ENCODE measurements at regions of chr17 and their contacts with region 1.

Region 1: GRCh38 chr17:43393944-43394482 is 4.8 kb upstream of the ARL4D start:
- DNase-seq: no peak
- H3K4me3 ChIP-seq: no peak overlapping the region
- CTCF ChIP-seq: peak; percentile 70

Region 2: DNA sequence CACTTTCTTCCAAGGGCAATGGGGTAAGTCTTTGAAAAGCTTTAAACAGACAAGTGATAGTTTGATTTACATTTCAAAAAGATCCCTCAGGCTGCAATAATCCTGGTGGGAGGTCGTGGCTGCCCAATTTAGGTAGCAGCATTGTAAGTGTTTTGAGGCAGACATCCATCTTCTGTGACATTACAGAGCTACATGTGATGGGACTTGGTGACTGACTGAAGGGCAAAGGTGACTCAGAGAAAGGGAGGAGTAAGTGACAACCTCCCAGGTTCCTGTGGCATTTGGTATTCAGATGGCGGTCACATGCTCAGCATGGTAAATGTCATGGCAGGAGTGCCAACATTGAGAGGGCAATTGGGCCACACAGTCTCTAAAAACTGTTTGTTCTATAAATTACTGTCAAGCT is 1032.2 kb before region 1 on chr17:
- CTCF ChIA-PET with region 1: no interaction called
- POLR2A ChIA-PET with region 1: no interaction called
- DNase-seq: no peak
- H3K4me3 ChIP-seq: no peak overlapping the region
- CTCF ChIP-seq: no peak

Region 3: GRCh38 chr17:43224146-43224695 is 169.8 kb before region 1 on chr17:
- CTCF ChIA-PET with region 1: no interaction called
- POLR2A ChIA-PET with region 1: no interaction called
- DNase-seq: no peak
- H3K4me3 ChIP-seq: no peak overlapping the region
- CTCF ChIP-seq: no peak

Region 4: DNA sequence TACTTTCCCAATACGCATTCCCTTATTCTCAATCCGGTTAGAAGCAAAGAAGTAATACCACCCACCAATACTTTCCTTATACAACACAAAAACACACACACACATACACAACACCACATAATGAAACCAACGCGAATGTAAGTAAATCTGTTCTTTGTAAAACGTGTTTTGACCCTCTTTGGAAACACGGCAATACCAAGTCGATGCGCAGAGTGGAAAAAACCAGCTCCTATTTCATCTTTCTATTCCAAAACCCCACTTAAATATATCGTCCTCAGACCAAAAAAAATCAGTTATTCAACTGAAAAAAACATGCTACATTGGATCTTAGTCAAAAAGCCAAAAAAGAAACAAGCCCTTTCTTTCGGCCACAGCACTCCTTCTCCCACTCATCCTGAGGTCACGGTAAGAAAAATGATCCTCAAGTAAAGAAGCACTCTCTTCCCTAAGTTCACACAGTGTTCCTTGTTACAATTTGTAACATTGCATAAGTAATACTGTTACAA is 26.2 kb before region 1 on chr17:
- CTCF ChIA-PET with region 1: interaction called, 22 read pairs
- POLR2A ChIA-PET with region 1: interaction called, 72 read pairs
- DNase-seq: no peak
- H3K4me3 ChIP-seq: peak overlapping the region; percentile 46
- CTCF ChIP-seq: no peak

Region 5: GRCh38 chr17:43406676-43407645 is 12.9 kb after region 1 on chr17:
- CTCF ChIA-PET with region 1: interaction called, 83 read pairs
- POLR2A ChIA-PET with region 1: interaction called, 11 read pairs
- DNase-seq: no peak
- H3K4me3 ChIP-seq: no peak overlapping the region
- CTCF ChIP-seq: no peak

Region 6: GRCh38 chr17:43418441-43419374 is 24.7 kb after region 1 on chr17:
- CTCF ChIA-PET with region 1: interaction called, 83 read pairs
- POLR2A ChIA-PET with region 1: interaction called, 27 read pairs
- DNase-seq: peak; percentile 74
- H3K4me3 ChIP-seq: peak overlapping the region; percentile 20; the same call in 1 of the 2 replicates
- CTCF ChIP-seq: peak; percentile 19

Region 7: GRCh38 chr17:43423777-43424455 is 29.9 kb after region 1 on chr17:
- CTCF ChIA-PET with region 1: interaction called, 28 read pairs
- POLR2A ChIA-PET with region 1: interaction called, 27 read pairs
- DNase-seq: no peak
- H3K4me3 ChIP-seq: no peak overlapping the region
- CTCF ChIP-seq: no peak

Region 8: DNA sequence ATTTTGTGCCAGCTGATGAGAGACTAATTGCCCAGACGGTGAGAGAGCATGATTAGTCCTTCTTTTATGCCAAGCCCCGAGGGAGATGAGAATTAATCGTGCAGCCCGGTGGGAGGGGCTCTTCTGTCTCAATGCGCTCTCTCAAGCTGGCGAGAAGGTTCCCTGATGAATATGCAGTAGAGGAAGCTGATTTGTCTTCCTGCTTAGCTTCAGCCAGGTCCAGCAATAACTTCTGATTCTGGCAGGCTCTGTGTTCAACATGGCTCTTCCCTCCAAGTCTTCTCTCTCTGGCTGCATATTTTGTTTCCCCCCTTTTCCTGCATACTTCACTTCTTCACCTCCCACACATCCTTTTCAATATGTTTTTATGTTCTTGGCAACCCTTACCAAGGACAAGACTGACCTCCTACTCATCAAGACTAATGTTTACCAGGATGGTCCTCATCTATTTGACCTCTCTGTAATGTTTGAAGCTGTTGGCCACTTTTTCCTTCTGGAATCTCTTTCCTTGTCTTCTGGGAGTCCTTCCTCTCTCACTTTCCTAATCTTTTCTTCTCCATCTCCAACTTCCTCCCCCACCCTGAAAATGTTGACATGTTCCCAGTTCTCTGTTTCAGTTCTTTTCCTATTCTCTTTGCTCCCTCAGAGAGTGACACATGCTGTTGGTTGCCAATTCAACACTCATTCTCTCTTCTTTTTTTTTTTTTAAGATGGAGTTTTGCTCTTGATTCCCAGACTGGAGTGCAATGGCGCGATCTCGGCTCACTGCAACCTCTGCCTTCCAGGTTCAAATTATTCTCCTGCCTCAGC is 37.9 kb after region 1 on chr17:
- CTCF ChIA-PET with region 1: interaction called, 28 read pairs
- POLR2A ChIA-PET with region 1: interaction called, 6 read pairs
- DNase-seq: no peak
- H3K4me3 ChIP-seq: no peak overlapping the region
- CTCF ChIP-seq: no peak

Region 9: GRCh38 chr17:43467981-43468581 is 74.1 kb after region 1 on chr17:
- CTCF ChIA-PET with region 1: interaction called, 1,137 read pairs
- POLR2A ChIA-PET with region 1: interaction called, 50 read pairs
- DNase-seq: peak; percentile 92
- H3K4me3 ChIP-seq: no peak overlapping the region
- CTCF ChIP-seq: no peak